ENCODE measurements at regions of chr10 and their contacts with region 1.

Region 1: GRCh38 chr10:114779803-114780609 is 41.6 kb upstream of the FHIP2A start:
- DNase-seq: peak; percentile 76
- ATAC-seq: peak; percentile 82
- H3K4me3 ChIP-seq: peak overlapping the region in 1 of 2 experiments; percentile 14; a peak in 1 of 4 replicates
- H3K27ac ChIP-seq: peak overlapping the region; percentile 49
- H3K4me1 ChIP-seq: peaks cover 26 to 27% of the 10 kb centered on the region in 2 experiments
- H3K27me3 ChIP-seq: no peaks in the 10 kb centered on the region
- CTCF ChIP-seq: no peak
- POLR2A ChIP-seq: no peak
- RAD21 ChIP-seq: peak; percentile 39; the same call in 1 of the 2 replicates

Region 2: DNA sequence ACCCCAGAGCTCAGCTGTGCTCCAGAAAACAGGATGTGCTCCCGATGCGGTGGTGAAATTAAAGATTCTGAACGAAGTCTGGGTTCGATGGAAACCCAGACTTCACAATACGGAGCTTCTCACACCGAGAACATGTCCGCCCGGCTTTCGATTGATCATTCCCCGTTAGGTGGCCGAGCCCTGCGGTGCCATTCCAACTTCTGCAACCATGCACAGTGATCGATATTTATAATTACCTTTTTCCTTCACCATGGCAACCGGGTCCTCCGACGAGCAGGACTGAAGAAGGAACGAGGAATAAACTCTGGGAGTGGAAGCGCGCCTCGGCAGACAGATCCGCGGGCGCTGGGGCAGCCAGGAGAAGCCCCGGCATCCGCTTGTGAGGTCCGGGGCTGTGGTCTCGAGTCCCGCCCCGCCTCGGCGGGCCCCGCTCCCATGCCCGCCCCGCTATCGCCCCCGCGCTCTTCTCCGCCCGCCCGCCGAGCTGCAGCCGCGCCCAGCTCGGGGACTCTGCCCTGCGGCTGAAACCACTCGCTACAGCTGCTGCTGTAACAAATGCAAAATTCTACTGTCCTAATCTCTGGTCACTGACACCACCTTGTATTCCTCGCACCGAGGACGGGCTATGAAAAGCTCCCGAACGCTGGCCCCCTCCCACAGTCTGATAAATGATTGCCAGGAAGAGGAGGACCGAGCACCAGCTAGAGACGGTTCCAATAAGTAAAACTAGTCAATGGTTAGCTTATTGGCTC is 148.2 kb before region 1 on chr10:
- CTCF ChIA-PET with region 1: no interaction called
- POLR2A ChIA-PET with region 1: no interaction called
- RAD21 ChIA-PET with region 1: no interaction called
- intact Hi-C with region 1: loop called (anchors 10 kb)
- DNase-seq: no peak
- ATAC-seq: peak; percentile 61
- H3K4me3 ChIP-seq: peak overlapping the region; percentile 49 to 65
- H3K27ac ChIP-seq: no peak overlapping the region
- H3K4me1 ChIP-seq: peaks cover 39 to 60% of the 10 kb centered on the region in 2 experiments
- H3K27me3 ChIP-seq: peaks cover 14% of the 10 kb centered on the region; the same call in 1 of the 2 replicates
- CTCF ChIP-seq: no peak
- POLR2A ChIP-seq: no peak
- RAD21 ChIP-seq: no peak